Heart left ventricle (tissue), 16 donors: ENCODE measurements at regions of chr6 and their contacts with region 1.

Region 1: DNA sequence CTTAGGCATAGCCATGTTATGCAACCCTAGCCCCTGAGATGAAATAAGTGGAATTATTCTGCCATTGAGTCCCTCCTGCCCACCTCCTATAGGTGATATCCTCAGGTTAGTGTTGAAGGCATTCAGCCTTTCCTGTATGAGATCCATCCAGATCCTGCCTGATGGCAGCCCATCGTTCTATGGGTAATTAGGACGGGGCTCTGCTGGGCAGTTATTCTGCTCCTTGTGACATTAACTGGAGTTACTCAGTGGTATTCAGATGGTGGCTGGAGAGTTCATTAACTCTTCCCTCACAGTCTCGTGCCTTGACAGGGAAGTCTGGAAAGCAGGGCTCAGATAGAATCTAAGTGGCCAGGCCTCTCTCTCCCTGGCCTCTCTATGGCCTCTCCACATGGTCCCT is 9.3 kb upstream of the GMDS start:
- DNase-seq: no peak
- ATAC-seq: no peak
- H3K4me3 ChIP-seq: no peak overlapping the region
- H3K27ac ChIP-seq: no peak overlapping the region
- H3K4me1 ChIP-seq: no peaks in the 10 kb centered on the region
- H3K27me3 ChIP-seq: no peaks in the 10 kb centered on the region
- CTCF ChIP-seq: no peak
- POLR2A ChIP-seq: no peak

Region 2: DNA sequence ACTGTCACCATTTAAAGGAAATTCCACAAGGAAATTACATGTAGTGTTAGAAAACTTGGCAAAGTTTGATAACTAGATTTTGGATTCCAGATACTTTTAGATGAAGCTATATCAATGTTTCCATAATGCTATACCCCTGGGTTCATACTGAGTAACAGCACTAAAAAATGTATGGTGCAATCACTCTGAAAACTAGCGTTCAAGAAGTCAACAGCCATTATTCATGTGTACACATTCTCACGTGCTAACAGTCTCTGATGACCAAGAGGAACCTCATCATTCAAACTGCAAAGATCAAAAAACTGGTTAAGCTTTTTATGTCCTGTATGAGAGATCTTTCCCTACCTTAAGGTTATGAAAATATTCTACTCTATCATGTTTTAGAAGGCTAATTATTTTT is 206.9 kb before region 1 on chr6:
- intact Hi-C with region 1: no loop called
- DNase-seq: no peak
- ATAC-seq: no peak
- H3K4me3 ChIP-seq: no peak overlapping the region
- H3K27ac ChIP-seq: no peak overlapping the region
- H3K4me1 ChIP-seq: no peaks in the 10 kb centered on the region
- H3K27me3 ChIP-seq: no peaks in the 10 kb centered on the region
- CTCF ChIP-seq: no peak
- POLR2A ChIP-seq: no peak

Region 3: DNA sequence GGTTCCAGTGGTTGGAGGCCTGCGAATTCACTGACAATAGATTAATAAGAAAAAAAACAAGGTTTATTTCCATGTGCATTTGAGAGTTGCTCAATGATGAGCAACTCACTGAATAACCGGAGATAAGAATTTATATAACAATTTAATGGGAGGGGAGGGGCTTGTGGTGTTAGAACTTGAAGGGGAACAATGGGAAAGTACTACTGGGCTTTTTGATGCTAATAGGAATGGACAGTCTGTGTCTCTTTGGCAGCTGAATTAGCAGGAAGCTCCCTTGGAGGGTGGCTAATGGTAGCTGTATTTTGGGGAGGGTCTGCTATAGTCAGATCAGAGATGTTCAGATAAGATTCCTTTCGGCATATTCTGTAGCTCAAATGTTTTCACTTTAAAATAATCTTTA is 53.1 kb after region 1 on chr6:
- intact Hi-C with region 1: loop called in 1 of 10 experiments (anchors 5 kb)
- DNase-seq: no peak
- ATAC-seq: no peak
- H3K4me3 ChIP-seq: no peak overlapping the region
- H3K27ac ChIP-seq: no peak overlapping the region
- H3K4me1 ChIP-seq: no peaks in the 10 kb centered on the region
- H3K27me3 ChIP-seq: no peaks in the 10 kb centered on the region
- CTCF ChIP-seq: no peak
- POLR2A ChIP-seq: no peak